T-cell (primary cell): ENCODE measurements at regions of chr2 and their contacts with region 1.

Region 1: GRCh38 chr2:43194121-43194869 is 32.1 kb downstream of the ZFP36L2 start:
- DNase-seq: no peak
- ATAC-seq: peak in 3 of 4 experiments; percentile 9 to 11 (median 11)
- H3K4me3 ChIP-seq: peak overlapping the region; percentile 53 to 71
- H3K4me3 Mint-ChIP-seq: peak overlapping the region; percentile 83 to 87 (median 86)
- H3K27ac ChIP-seq: peak overlapping the region; percentile 98
- H3K27ac Mint-ChIP-seq: peak overlapping the region; percentile 100
- H3K4me1 ChIP-seq: peaks cover 35 to 93% of the 10 kb centered on the region in 2 experiments
- H3K4me1 Mint-ChIP-seq: peaks cover 58 to 71% (median 63%) of the 10 kb centered on the region in 3 donors
- H3K27me3 ChIP-seq: no peaks in the 10 kb centered on the region
- H3K27me3 Mint-ChIP-seq: no peaks in the 10 kb centered on the region

Region 2: GRCh38 chr2:42196403-42197267 is 997.7 kb before region 1 on chr2:
- CTCF ChIA-PET with region 1: no interaction called
- POLR2A ChIA-PET with region 1: no interaction called
- DNase-seq: peak in 34 of 35 experiments; percentile 4 to 72 (median 36)
- ATAC-seq: peak; percentile 78 to 83 (median 82)
- H3K4me3 ChIP-seq: no peak overlapping the region
- H3K4me3 Mint-ChIP-seq: peak overlapping the region in 1 of 3 donors; percentile 41
- H3K27ac ChIP-seq: peak overlapping the region; percentile 1
- H3K27ac Mint-ChIP-seq: peak overlapping the region; percentile 35 to 65
- H3K4me1 ChIP-seq: peaks cover 24 to 40% of the 10 kb centered on the region in 2 experiments
- H3K4me1 Mint-ChIP-seq: peaks cover 85 to 87% (median 86%) of the 10 kb centered on the region in 3 donors
- H3K27me3 ChIP-seq: no peaks in the 10 kb centered on the region
- H3K27me3 Mint-ChIP-seq: no peaks in the 10 kb centered on the region

Region 3: DNA sequence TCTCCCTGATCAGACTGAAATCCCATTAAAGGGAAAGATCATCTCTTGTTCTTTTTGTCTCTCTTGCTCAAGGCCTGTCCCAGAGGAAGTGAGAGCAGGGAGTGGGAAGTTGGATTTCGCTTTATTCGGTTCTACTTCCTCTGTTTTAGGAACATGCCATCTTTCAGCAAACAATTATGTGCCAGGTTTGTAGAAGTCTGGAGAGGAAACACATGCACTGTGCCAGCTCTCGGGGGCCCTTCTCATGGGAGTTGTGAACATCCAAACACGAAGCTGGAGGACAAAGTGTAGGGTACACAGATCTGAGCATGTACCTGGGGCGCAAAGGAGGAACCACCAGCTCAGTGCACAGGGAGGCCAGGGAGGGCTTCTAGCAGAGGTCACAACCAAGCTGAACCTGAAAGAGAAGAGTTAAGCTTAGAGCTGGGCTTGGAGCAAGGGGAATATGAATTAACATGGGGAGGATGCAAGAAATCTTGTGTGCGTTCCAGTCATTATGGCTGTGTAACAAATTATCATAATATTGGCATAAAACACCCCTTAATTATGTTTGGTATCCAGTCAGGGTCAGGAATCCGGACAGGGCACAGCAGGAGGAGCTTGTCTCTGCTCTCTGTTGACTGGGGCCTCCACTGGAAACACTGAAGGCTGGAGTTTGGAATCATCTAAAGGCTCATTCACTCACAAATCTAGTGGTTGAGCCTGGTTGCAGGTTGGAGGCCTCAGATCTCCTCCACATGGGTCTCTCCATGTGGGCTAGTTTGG is 96.5 kb before region 1 on chr2:
- CTCF ChIA-PET with region 1: no interaction called
- POLR2A ChIA-PET with region 1: no interaction called
- DNase-seq: no peak
- ATAC-seq: no peak
- H3K4me3 ChIP-seq: no peak overlapping the region
- H3K4me3 Mint-ChIP-seq: no peak overlapping the region
- H3K27ac ChIP-seq: no peak overlapping the region
- H3K27ac Mint-ChIP-seq: no peak overlapping the region
- H3K4me1 ChIP-seq: no peaks in the 10 kb centered on the region
- H3K4me1 Mint-ChIP-seq: peaks cover 0 to 6% (median 3%) of the 10 kb centered on the region in 3 donors
- H3K27me3 ChIP-seq: no peaks in the 10 kb centered on the region
- H3K27me3 Mint-ChIP-seq: no peaks in the 10 kb centered on the region

Region 4: GRCh38 chr2:43159797-43160196 is 34.5 kb before region 1 on chr2:
- CTCF ChIA-PET with region 1: no interaction called
- POLR2A ChIA-PET with region 1: interaction called in 1 of 2 experiments, 10 read pairs
- DNase-seq: no peak
- ATAC-seq: no peak
- H3K4me3 ChIP-seq: no peak overlapping the region
- H3K4me3 Mint-ChIP-seq: peak overlapping the region; percentile 2 to 81 (median 36)
- H3K27ac ChIP-seq: peak overlapping the region; percentile 98
- H3K27ac Mint-ChIP-seq: peak overlapping the region; percentile 97 to 99
- H3K4me1 ChIP-seq: peaks cover 32 to 86% of the 10 kb centered on the region in 2 experiments
- H3K4me1 Mint-ChIP-seq: peaks cover 78 to 88% (median 83%) of the 10 kb centered on the region in 3 donors
- H3K27me3 ChIP-seq: no peaks in the 10 kb centered on the region
- H3K27me3 Mint-ChIP-seq: no peaks in the 10 kb centered on the region